ENCODE measurements at regions of chr10 and their contacts with region 1.

Region 1: DNA sequence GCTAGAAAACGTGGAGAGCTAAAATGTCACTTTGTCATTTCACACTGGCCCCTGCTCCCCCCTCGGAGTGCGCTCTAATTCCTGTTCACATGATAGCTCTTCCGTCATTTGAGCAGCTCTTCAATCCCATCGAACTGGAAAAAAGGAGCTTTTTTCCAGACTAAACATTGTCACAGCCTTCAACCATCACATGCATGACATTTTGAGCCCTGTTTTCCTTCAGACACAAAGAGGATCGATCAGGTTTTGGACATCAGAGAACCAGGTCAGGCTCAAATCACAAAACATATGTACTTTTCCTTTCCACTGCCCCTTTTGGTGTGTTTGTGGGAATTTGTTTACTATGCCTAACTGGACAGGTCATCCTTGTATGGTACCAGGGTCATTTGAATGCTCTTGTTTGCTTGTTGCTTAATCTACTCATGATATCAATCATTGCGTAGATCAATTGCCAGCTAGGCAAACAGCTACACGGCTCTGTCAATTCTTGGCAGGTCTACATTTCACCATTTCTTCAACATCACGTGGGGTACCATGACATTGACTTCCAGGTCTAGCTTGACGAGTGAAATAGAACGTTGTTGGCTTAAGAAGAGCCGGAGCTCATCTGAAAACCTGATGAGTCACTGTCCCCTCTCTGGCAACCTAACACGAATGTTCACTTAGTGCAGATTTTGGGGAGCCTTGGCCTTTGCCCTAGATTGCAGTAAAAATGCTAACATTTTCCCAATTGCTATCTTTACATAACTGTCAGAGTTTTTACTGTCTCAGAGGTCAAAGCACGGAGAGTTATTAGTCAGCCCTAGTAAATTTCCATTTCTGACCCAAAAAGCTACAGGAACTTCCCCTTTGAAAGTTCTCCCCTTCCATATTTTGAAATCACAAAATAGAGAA is 87.3 kb downstream of the LYZL2 start:
- DNase-seq: peak; percentile 40 to 68 (median 56)
- ATAC-seq: peak; percentile 83
- H3K4me3 ChIP-seq: no peak overlapping the region
- H3K27ac ChIP-seq: peak overlapping the region; percentile 56
- H3K4me1 ChIP-seq: peaks cover 0 to 17% of the 10 kb centered on the region in 2 experiments; a peak in 4 of 5 replicates
- H3K27me3 ChIP-seq: no peaks in the 10 kb centered on the region
- CTCF ChIP-seq: no peak
- EP300 ChIP-seq: 0 out of 2 replicates have a peak, but pooled peaks have one; percentile 21
- POLR2A ChIP-seq: no peak
- RAD21 ChIP-seq: no peak; a peak in 1 of 4 replicates

Region 2: GRCh38 chr10:30553625-30554439 is 11.6 kb after region 1 on chr10:
- CTCF ChIA-PET with region 1: no interaction called
- POLR2A ChIA-PET with region 1: interaction called, 34 read pairs
- in situ Hi-C with region 1: no loop called
- intact Hi-C with region 1: no loop called
- DNase-seq: peak; percentile 69 to 82 (median 70)
- ATAC-seq: peak; percentile 68
- H3K4me3 ChIP-seq: peak overlapping the region; percentile 10; the same call in 1 of the 2 replicates
- H3K27ac ChIP-seq: peak overlapping the region; percentile 97
- H3K4me1 ChIP-seq: peaks cover 20 to 37% of the 10 kb centered on the region in 2 experiments
- H3K27me3 ChIP-seq: no peaks in the 10 kb centered on the region
- CTCF ChIP-seq: no peak
- EP300 ChIP-seq: 0 out of 2 replicates have a peak, but pooled peaks have one; percentile 35
- POLR2A ChIP-seq: peak; percentile 36
- RAD21 ChIP-seq: no peak

Measured in K562 (cell line).